CD4-positive, alpha-beta T cell (primary cell): ENCODE measurements at regions of chr10 and their contacts with region 1.

Region 1: GRCh38 chr10:7635408-7636110 is 31.2 kb downstream of the ITIH5 start:
- DNase-seq: no peak
- ATAC-seq: no peak
- H3K4me3 ChIP-seq: no peak overlapping the region
- H3K4me3 Mint-ChIP-seq: no peak overlapping the region
- H3K27ac ChIP-seq: no peak overlapping the region
- H3K27ac Mint-ChIP-seq: no peak overlapping the region
- H3K4me1 ChIP-seq: no peaks in the 10 kb centered on the region
- H3K4me1 Mint-ChIP-seq: no peaks in the 10 kb centered on the region
- H3K27me3 ChIP-seq: peaks cover 5% of the 10 kb centered on the region in 2 experiments
- H3K27me3 Mint-ChIP-seq: peaks cover 32% of the 10 kb centered on the region
- CTCF ChIP-seq: no peak

Region 2: DNA sequence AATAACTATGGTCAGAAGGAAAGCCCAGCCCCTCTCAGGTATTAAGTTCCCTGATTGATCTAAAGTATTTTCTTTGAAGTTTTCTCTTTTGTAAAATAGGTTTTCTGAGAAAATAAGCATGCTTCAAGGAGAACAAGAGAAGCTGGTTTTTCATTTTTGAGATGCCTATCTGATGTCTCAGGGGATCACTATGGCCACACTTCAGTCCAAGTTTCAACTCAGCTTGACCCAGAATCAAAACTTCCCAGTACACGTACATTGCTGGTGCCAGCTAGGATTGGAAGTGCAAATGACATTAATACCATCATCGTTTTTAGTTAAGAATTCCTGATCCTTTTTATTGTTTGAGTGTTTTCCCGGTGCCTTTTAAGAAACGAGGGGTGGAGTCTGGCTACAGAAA is 24.0 kb after region 1 on chr10:
- CTCF ChIA-PET with region 1: no interaction called
- POLR2A ChIA-PET with region 1: no interaction called
- intact Hi-C with region 1: loop called in 1 of 2 experiments (anchors 1 kb)
- DNase-seq: no peak
- ATAC-seq: no peak
- H3K4me3 ChIP-seq: no peak overlapping the region
- H3K4me3 Mint-ChIP-seq: no peak overlapping the region
- H3K27ac ChIP-seq: no peak overlapping the region
- H3K27ac Mint-ChIP-seq: no peak overlapping the region
- H3K4me1 ChIP-seq: no peaks in the 10 kb centered on the region
- H3K4me1 Mint-ChIP-seq: no peaks in the 10 kb centered on the region
- H3K27me3 ChIP-seq: peaks cover 18 to 29% of the 10 kb centered on the region in 2 experiments
- H3K27me3 Mint-ChIP-seq: peaks cover 60% of the 10 kb centered on the region
- CTCF ChIP-seq: no peak